Heart right ventricle (tissue), 16 donors: ENCODE measurements at regions of chr9 and their contacts with region 1.

Region 1: GRCh38 chr9:133184962-133185361 is 21.2 kb upstream of the GBGT1 start:
- DNase-seq: peak in 1 of 2 donors; percentile 68
- ATAC-seq: peak in 7 of 8 donors; percentile 68 to 91 (median 84)
- H3K4me3 ChIP-seq: no peak overlapping the region
- H3K27ac ChIP-seq: no peak overlapping the region
- H3K4me1 ChIP-seq: peaks cover 0 to 17% (median 5%) of the 10 kb centered on the region in 9 donors
- H3K27me3 ChIP-seq: peaks cover 0 to 28% (median 11%) of the 10 kb centered on the region in 7 donors
- CTCF ChIP-seq: peak; percentile 32 to 73 (median 62)

Region 2: GRCh38 chr9:133238851-133239532 is 54.0 kb after region 1 on chr9:
- intact Hi-C with region 1: loop called in 1 of 10 experiments (anchors 5 kb)
- DNase-seq: peak; percentile 70 to 72
- ATAC-seq: peak; percentile 42 to 81 (median 60)
- H3K4me3 ChIP-seq: peak overlapping the region; percentile 12 to 52 (median 41)
- H3K27ac ChIP-seq: peak overlapping the region; percentile 72 to 96 (median 90)
- H3K4me1 ChIP-seq: peaks cover 15 to 44% (median 26%) of the 10 kb centered on the region in 9 donors
- H3K27me3 ChIP-seq: peaks cover 0 to 7% (median 0%) of the 10 kb centered on the region in 7 donors
- CTCF ChIP-seq: peak; percentile 49 to 86 (median 76)

Region 3: DNA sequence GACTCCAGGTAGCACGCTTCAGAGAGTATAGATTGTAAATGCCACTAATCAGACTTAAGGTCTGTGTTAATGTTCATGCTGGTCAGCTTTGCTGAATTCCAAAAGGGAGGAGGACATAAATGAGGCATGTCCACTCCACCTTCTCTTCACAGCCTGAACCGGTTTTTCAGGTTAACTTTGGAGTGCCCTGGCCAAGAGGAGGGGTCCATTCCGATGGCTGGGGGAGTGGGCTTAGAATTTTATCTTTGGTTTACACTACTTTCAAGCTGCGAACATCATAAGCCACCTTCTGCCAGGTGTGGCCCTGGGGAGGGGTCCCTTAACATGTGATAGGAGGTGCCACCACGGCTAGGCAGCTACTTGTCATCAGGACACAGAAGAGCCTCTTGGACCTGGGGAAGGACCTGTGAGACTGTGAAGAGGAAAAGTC is 65.8 kb after region 1 on chr9:
- intact Hi-C with region 1: no loop called
- DNase-seq: no peak
- ATAC-seq: no peak
- H3K4me3 ChIP-seq: no peak overlapping the region
- H3K27ac ChIP-seq: no peak overlapping the region
- H3K4me1 ChIP-seq: peaks cover 0 to 24% (median 7%) of the 10 kb centered on the region in 9 donors
- H3K27me3 ChIP-seq: peaks cover 0 to 14% (median 0%) of the 10 kb centered on the region in 7 donors
- CTCF ChIP-seq: no peak

Region 4: GRCh38 chr9:133275105-133276000 is 90.4 kb after region 1 on chr9 and contains the start of gene ABO:
- intact Hi-C with region 1: loop called in 7 of 10 experiments (anchors 1 to 5 kb)
- DNase-seq: peak; percentile 44 to 48
- ATAC-seq: peak; percentile 77 to 95 (median 86)
- H3K4me3 ChIP-seq: peak within 1 kb of the TSS; percentile 53 to 82 (median 66)
- H3K27ac ChIP-seq: peak within 1 kb of the TSS; percentile 50 to 93 (median 86)
- H3K4me1 ChIP-seq: peaks cover 0 to 23% (median 3%) of the 10 kb centered on the region in 9 donors
- H3K27me3 ChIP-seq: peaks cover 0 to 53% (median 27%) of the 10 kb centered on the region in 7 donors
- CTCF ChIP-seq: peak; percentile 13 to 69 (median 40)
- total RNA-seq, gene ABO: 0.25 to 2.7 (median 1.6) TPM

Region 5: DNA sequence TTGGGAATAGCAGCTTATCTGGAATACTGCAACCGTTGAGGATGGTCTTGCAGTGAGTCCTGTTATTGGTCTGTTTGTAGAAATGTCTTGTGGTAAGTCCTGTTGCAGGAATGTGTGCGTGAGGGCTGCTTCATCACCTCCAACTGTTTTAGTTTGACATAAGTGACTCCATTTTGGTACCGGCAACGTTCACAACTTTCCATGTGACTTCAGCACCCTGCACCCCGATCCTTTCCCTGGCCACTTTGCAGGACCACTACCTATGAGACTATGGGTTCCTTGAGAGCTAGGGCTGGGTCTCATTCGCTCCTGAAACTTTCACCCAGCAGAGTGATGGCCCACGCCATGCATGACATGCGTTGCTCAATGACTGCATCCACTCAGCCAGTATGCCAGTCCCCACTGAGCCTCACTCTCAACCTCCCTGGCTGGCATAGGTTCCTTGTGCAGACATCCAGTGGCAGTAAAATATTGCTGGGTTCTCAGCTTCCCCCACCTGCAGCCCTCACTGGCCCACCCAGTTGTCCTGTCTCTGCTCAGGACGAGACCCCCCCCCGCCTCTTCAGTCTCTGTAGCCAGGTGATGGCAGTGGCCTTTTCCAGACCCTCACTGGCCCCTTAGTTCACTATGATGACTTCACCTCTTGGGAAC is 143.0 kb after region 1 on chr9:
- intact Hi-C with region 1: loop called (anchors 2 to 5 kb)
- DNase-seq: no peak
- ATAC-seq: peak in 2 of 8 donors; percentile 16 to 18
- H3K4me3 ChIP-seq: no peak overlapping the region
- H3K27ac ChIP-seq: no peak overlapping the region
- H3K4me1 ChIP-seq: no peaks in the 10 kb centered on the region
- H3K27me3 ChIP-seq: peaks cover 0 to 2% (median 0%) of the 10 kb centered on the region in 7 donors
- CTCF ChIP-seq: no peak

Region 6: GRCh38 chr9:133406480-133407307 is 221.7 kb after region 1 on chr9:
- intact Hi-C with region 1: loop called in 1 of 10 experiments (anchors 10 kb)
- DNase-seq: peak; percentile 67 to 75
- ATAC-seq: peak; percentile 63 to 91 (median 82)
- H3K4me3 ChIP-seq: no peak overlapping the region
- H3K27ac ChIP-seq: no peak overlapping the region
- H3K4me1 ChIP-seq: peaks cover 0 to 13% (median 0%) of the 10 kb centered on the region in 9 donors
- H3K27me3 ChIP-seq: no peaks in the 10 kb centered on the region
- CTCF ChIP-seq: peak; percentile 79 to 96 (median 92)

Region 7: DNA sequence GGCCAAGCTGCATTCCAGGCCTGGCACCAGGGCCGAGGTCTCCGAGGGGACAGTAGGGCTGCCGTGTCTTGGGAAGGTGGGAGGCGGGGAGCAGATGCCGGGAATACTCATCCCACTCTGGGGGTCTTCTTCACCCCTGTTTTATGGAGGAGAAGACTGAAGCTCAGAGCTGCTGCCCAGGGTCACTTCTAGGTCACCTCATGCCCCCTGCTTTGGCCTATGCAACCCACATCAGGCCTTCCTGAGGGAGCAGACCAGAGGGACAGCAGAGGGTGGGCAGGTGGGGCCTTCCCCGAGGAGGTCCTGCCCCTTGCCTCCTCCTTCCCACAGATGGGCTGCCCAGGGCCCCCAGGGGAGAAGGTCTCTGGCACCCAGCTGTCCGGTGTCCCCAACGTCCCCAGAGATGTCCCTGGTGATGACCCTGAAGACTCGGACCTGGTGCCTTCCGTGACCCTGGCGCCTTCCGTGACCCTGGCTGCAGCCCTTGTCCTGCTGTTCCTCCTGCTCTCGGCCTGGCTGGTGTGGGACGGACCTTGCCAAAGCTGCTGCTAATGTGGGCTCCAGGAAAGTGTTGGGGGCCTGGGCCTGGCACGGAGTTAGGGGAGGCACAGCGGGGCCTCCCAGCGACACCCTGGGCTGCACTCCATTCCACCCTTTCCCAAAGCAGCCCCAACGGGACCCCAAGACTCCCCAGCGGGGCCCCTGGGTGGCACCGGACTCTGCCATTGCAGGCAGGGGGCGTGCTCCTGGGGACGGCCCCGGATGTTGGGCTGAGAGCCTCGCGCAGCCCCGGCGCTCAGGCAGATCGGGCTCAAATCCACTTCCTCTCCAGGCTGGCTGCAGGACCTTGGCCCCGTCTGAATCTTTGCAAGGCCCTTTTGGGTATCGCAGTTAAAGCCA is 300.6 kb after region 1 on chr9:
- intact Hi-C with region 1: loop called (anchors 2 to 5 kb)
- DNase-seq: no peak
- ATAC-seq: peak in 5 of 8 donors; percentile 3 to 23 (median 8)
- H3K4me3 ChIP-seq: no peak overlapping the region
- H3K27ac ChIP-seq: no peak overlapping the region
- H3K4me1 ChIP-seq: peaks cover 0 to 14% (median 5%) of the 10 kb centered on the region in 9 donors
- H3K27me3 ChIP-seq: peaks cover 0 to 16% (median 0%) of the 10 kb centered on the region in 7 donors
- CTCF ChIP-seq: no peak